ENCODE measurements at regions of chr3 and their contacts with region 1.

Region 1: DNA sequence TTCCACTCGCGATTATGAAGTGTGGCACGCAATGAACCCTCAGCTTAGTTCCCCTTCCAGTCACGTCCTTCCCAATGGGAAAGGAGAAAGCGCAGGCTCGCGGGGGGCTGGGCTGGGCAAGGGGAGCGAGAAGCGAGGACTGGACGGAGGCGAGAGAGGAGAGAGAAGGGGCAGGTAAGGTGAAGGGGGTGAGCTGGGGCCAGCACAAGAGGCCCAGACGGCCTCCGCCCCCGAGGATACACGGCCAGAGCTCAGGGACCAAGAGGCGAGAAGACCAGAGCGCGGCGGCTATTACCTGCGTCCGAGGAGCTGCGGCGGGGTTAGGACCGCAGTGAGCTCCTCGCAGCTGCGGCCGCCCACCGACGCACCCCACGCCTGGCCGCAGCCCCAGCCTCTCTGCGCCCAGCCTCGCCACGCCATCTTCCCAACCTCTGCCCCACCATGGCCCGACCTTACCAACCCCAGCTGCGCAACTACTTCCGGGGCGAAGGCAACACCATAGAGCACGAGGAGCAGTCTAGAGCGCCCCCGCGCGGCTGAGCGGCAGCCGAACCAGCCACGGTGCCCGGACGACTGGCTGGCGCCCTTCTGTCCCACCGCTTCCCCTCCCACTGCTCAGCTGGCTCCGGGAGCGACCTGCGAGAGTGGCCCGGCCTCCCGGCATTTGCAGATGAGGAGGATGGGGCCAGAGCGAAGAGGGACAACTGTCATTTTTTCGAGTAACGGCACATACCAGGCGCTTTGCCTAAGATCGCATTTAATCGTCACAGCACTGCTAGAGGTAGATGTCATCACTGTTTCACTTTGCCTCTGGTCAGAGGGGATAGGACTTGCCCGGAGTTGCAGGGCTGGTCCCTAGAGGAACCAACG is at the start of gene PARL:
- DNase-seq: peak; percentile 94 to 98 (median 96)
- H3K4me3 ChIP-seq: peak within 1 kb of the TSS; percentile 58 to 85 (median 70)
- H3K27ac ChIP-seq: peak within 1 kb of the TSS; percentile 50 to 89 (median 56)
- H3K4me1 ChIP-seq: peaks cover 11 to 21% of the 10 kb centered on the region in 2 donors
- H3K27me3 ChIP-seq: no peaks in the 10 kb centered on the region
- CTCF ChIP-seq: peak; percentile 85 to 97 (median 94)
- POLR2A ChIP-seq: peak; percentile 32 to 61
- total RNA-seq, gene PARL: 29.4 to 83.4 (median 45.3) TPM

Region 2: GRCh38 chr3:183477801-183478456 is 406.7 kb before region 1 on chr3:
- intact Hi-C with region 1: loop called in 1 of 2 experiments (anchors 10 kb)
- DNase-seq: peak in 1 of 7 donors; percentile 48
- H3K4me3 ChIP-seq: no peak overlapping the region
- H3K27ac ChIP-seq: no peak overlapping the region
- H3K4me1 ChIP-seq: no peaks in the 10 kb centered on the region
- H3K27me3 ChIP-seq: no peaks in the 10 kb centered on the region
- CTCF ChIP-seq: no peak
- POLR2A ChIP-seq: no peak

Region 3: DNA sequence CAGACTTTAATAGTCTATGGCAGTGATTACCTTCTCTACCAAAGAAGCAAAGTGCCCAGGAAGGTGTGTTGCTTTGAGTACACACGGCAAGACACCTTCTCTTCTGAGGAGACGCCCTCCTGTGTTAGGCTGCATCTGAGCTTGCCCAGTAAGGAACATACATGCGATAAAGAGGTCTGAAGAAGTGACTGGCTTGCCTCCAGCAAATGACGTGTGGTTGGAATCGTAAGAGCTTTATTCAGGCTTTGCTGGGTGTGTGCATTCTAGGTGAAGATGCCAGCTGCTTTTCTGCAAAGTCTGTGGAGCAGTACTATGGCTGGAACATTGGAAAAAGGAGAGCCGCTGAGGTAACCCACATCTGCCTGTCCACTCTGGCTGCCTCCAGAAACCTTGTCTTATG is 81.7 kb before region 1 on chr3:
- intact Hi-C with region 1: no loop called
- DNase-seq: peak in 2 of 7 donors; percentile 6 to 24
- H3K4me3 ChIP-seq: no peak overlapping the region
- H3K27ac ChIP-seq: no peak overlapping the region
- H3K4me1 ChIP-seq: no peaks in the 10 kb centered on the region
- H3K27me3 ChIP-seq: no peaks in the 10 kb centered on the region
- CTCF ChIP-seq: no peak
- POLR2A ChIP-seq: no peak

Region 4: GRCh38 chr3:183825456-183826161 is 59.1 kb before region 1 on chr3 and contains the start of gene MAP6D1:
- intact Hi-C with region 1: loop called (anchors 5 to 10 kb)
- DNase-seq: peak; percentile 38 to 63 (median 56)
- H3K4me3 ChIP-seq: peak within 1 kb of the TSS in 2 of 4 donors; percentile 13 to 72
- H3K27ac ChIP-seq: peak within 1 kb of the TSS in 3 of 5 donors; percentile 51 to 59 (median 54)
- H3K4me1 ChIP-seq: peaks cover 16 to 24% of the 10 kb centered on the region in 2 donors
- H3K27me3 ChIP-seq: no peaks in the 10 kb centered on the region
- CTCF ChIP-seq: peak in 4 of 6 experiments; percentile 15 to 31 (median 23)
- POLR2A ChIP-seq: no peak
- total RNA-seq, gene MAP6D1: 0.52 to 3.0 (median 1.7) TPM in 8 of 9 donors, not detected in the other

Region 5: DNA sequence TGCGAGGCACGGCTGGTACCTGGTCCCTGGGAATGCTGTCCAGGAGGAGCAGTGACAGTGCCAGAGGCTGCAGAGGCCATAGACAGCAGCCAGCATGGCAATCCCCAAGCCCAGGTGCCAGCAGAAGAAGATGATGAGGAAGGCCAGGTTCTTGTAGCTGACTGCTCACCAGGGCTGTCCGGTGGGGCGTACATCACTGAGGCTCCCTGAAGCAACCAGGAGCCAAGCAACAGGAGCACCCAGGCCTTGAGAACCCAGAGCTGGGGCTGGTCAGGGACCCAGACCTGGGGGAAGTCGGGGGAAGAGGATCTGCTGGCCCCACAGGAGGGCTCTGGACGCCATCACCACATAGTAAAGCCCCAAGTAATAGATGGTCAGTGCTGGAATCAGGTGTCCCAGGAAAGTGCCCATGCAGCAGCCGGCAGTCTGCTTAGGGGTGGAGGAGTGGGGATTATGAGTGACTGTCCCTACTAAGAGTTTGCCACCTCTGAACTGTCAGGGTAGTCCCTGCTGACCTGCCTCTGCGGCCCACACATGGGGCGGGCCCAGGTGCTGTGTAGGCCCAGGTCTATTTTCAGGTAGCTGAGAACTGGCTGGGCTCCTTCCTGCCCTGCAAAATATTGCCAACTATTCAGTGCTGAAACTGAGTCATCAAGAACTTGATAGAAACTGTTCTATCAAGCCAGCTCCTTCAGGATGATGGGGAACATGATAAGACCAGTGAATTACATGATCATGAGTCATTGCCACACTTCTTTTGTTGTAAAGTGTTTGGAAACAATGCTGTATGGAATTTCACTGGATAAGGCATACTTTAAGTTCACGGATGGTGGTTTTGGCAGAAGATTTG is 563.9 kb after region 1 on chr3:
- intact Hi-C with region 1: no loop called
- DNase-seq: peak in 1 of 7 donors; percentile 14
- H3K4me3 ChIP-seq: no peak overlapping the region
- H3K27ac ChIP-seq: no peak overlapping the region
- H3K4me1 ChIP-seq: no peaks in the 10 kb centered on the region
- H3K27me3 ChIP-seq: no peaks in the 10 kb centered on the region
- CTCF ChIP-seq: no peak
- POLR2A ChIP-seq: no peak

Measured in adrenal gland (tissue), 19 donors.